Activated CD8-positive, alpha-beta T cell treated with anti-CD3 and anti-CD28 coated beads for 36 hours (primary cell): ENCODE measurements at regions of chr10 and their contacts with region 1.

Region 1: DNA sequence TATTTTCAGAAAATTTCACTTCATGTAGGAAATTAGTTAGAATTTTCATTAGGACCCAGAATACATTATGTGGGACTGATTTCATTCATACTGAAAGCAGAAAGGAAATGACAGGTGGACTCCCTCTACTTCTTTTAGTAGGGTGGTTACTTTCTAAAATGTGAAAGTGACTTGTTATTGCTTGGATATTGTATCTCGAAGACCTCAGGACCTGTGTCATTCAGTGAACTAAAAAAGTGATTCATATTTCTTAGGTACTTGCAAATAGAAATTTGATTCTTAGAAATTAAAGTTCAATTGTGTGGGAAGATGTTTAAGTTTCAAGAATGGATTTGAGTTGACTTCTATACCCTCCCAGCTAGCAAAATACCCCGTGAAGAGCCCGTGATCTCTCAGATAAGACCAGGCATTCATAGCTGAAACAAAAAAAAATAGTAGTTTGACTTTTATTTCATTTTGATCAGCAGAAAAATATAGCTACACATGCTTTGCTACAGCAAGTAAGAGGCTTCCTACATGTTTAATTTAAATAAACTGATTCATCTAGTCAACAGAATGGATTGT is 1037.1 kb downstream of the GATA3 start:
- DNase-seq: peak; percentile 64
- ATAC-seq: peak; percentile 93
- H3K4me3 Mint-ChIP-seq: peak overlapping the region; percentile 60
- H3K27ac Mint-ChIP-seq: peak overlapping the region; percentile 98
- H3K4me1 Mint-ChIP-seq: peaks cover 41% of the 10 kb centered on the region
- H3K27me3 Mint-ChIP-seq: no peaks in the 10 kb centered on the region
- CTCF ChIP-seq: no peak

Region 2: DNA sequence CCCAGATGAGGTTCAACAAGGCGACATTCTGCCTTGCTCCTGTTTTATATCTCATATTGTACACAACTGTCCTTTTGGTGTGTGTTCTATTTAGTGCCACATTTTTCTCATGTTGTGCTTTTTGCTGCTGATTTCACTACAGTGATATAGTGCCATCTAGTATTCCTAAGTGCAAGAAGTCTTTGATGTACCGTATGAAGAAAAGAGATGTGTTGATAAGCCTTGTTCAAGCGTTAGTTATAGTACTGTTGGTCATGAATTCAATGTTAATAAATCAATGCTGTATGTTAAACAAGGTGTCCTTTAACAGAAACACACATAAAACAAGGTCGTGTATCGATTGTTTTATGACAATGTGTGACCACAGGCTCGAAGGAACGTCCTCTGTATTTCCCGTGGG is 97.8 kb before region 1 on chr10:
- CTCF ChIA-PET with region 1: no interaction called
- POLR2A ChIA-PET with region 1: no interaction called
- intact Hi-C with region 1: loop called (anchors 5 kb)
- DNase-seq: no peak
- ATAC-seq: no peak
- H3K4me3 Mint-ChIP-seq: no peak overlapping the region
- H3K27ac Mint-ChIP-seq: peak overlapping the region; percentile 21
- H3K4me1 Mint-ChIP-seq: peaks cover 51% of the 10 kb centered on the region
- H3K27me3 Mint-ChIP-seq: no peaks in the 10 kb centered on the region
- CTCF ChIP-seq: no peak

Region 3: DNA sequence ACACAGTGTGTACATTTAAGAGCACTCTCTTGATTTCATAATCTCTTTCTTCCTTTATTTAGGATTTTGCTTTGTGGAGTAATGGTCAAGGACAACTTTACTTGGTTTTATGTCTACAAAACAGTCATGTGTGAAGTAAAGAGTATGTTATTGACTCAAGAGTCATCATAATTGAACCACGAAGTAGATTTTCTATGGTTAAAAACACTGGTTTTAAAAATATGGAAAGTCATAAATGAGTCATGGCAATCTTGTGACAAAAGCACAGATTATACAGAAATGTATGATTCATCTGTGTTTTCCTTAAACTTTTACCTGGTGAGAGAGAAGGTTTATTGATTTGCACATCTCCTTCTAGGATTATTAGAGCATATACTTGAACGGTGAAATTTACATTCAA is 67.4 kb before region 1 on chr10:
- CTCF ChIA-PET with region 1: no interaction called
- POLR2A ChIA-PET with region 1: interaction called, 3 read pairs
- intact Hi-C with region 1: loop called (anchors 5 kb)
- DNase-seq: no peak
- ATAC-seq: peak; percentile 52
- H3K4me3 Mint-ChIP-seq: no peak overlapping the region
- H3K27ac Mint-ChIP-seq: peak overlapping the region; percentile 96
- H3K4me1 Mint-ChIP-seq: peaks cover 58% of the 10 kb centered on the region
- H3K27me3 Mint-ChIP-seq: no peaks in the 10 kb centered on the region
- CTCF ChIP-seq: no peak